ENCODE measurements at regions of chr1 and their contacts with region 1.

Region 1: DNA sequence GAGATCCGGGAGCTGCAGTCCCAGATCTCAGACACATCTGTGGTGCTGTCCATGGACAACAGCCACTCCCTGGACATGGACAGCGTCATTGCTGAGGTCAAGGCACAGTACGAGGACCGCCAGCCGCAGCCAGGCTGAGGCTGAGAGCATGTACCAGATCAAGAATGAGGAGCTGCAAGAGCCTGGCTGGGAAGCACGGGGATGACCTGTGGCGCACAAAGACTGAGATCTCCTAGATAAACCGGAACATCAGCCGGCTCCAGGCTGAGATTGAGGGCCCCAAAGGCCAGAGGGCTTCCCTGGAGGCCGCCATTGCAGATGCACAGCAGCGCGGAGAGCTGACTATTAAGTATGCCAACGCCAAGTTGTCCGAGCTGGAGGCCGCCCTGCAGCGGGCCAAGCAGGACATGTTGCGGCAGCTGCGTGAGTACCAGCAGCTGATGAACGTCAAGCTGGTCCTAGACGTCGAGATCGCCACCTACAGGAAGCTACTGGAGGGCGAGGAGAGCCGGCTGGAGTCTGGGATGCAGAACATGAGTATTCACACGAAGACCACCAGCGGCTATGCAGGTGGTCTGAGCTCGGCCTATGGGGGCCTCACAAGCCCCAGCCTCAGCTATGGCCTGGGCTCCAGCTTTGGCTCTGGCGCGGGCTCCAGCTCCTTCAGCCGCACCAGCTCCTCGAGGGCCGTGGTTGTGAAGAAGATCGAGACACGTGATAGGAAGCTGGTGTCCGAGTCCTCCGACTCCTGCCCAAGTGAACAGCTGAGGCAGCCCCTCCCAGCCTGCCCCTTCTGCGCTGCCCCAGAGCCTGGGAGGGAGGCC is 25.5 kb downstream of the ETV3L start:
- DNase-seq: peak; percentile 54
- H3K4me3 Mint-ChIP-seq: no peak overlapping the region
- H3K27ac Mint-ChIP-seq: no peak overlapping the region
- H3K4me1 Mint-ChIP-seq: peaks cover 3% of the 10 kb centered on the region
- H3K27me3 Mint-ChIP-seq: peaks cover 23% of the 10 kb centered on the region

Region 2: DNA sequence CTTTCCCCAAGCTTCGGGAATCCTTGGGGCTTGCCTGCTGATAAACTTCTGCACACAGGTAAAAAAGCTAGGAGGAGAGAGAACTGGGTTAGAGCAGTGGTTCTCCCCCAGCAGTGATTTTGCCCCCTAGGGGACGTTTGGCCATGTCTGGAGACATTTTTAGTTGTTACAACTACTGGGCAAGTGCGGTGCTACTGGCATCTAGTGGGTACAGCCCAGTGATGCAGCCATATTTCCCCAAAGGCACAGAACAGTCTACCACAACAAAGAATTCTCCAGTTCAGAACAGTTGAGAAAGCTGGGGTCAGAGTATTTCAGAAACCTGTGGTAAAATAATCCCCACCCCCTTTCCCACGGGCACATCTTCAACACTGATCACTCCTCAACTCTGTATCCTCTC is 112.4 kb before region 1 on chr1:
- CTCF ChIA-PET with region 1: no interaction called
- POLR2A ChIA-PET with region 1: no interaction called
- intact Hi-C with region 1: loop called (anchors 10 kb)
- DNase-seq: peak; percentile 51
- H3K4me3 Mint-ChIP-seq: no peak overlapping the region
- H3K27ac Mint-ChIP-seq: no peak overlapping the region
- H3K4me1 Mint-ChIP-seq: peaks cover 23% of the 10 kb centered on the region
- H3K27me3 Mint-ChIP-seq: no peaks in the 10 kb centered on the region

Region 3: GRCh38 chr1:156980551-156980950 is 93.6 kb before region 1 on chr1:
- CTCF ChIA-PET with region 1: no interaction called
- POLR2A ChIA-PET with region 1: no interaction called
- intact Hi-C with region 1: no loop called
- DNase-seq: no peak
- H3K4me3 Mint-ChIP-seq: no peak overlapping the region
- H3K27ac Mint-ChIP-seq: no peak overlapping the region
- H3K4me1 Mint-ChIP-seq: no peaks in the 10 kb centered on the region
- H3K27me3 Mint-ChIP-seq: peaks cover 16% of the 10 kb centered on the region

Region 4: GRCh38 chr1:157056269-157056668 is 17.9 kb before region 1 on chr1:
- CTCF ChIA-PET with region 1: interaction called, 11 read pairs
- POLR2A ChIA-PET with region 1: no interaction called
- intact Hi-C with region 1: no loop called
- DNase-seq: no peak
- H3K4me3 Mint-ChIP-seq: no peak overlapping the region
- H3K27ac Mint-ChIP-seq: no peak overlapping the region
- H3K4me1 Mint-ChIP-seq: no peaks in the 10 kb centered on the region
- H3K27me3 Mint-ChIP-seq: peaks cover 27% of the 10 kb centered on the region

Region 5: GRCh38 chr1:157105988-157106812 is 32.0 kb after region 1 on chr1:
- CTCF ChIA-PET with region 1: no interaction called
- POLR2A ChIA-PET with region 1: no interaction called
- intact Hi-C with region 1: no loop called
- DNase-seq: peak; percentile 73
- H3K4me3 Mint-ChIP-seq: no peak overlapping the region
- H3K27ac Mint-ChIP-seq: no peak overlapping the region
- H3K4me1 Mint-ChIP-seq: peaks cover 11% of the 10 kb centered on the region
- H3K27me3 Mint-ChIP-seq: peaks cover 26% of the 10 kb centered on the region

Measured in activated CD4-positive, alpha-beta memory T cell treated with anti-CD3 and anti-CD28 coated beads for 36 hours (primary cell).